WTC11 (cell line): ENCODE measurements at regions of chr1 and their contacts with region 1.

Region 1: GRCh38 chr1:224457782-224458144 is 23.2 kb upstream of the WDR26 start:
- DNase-seq: no peak
- ATAC-seq: no peak
- H3K4me3 Mint-ChIP-seq: no peak overlapping the region
- H3K27ac Mint-ChIP-seq: no peak overlapping the region
- H3K4me1 Mint-ChIP-seq: peaks cover 17% of the 10 kb centered on the region
- H3K27me3 Mint-ChIP-seq: no peaks in the 10 kb centered on the region
- CTCF ChIP-seq: no peak

Region 2: GRCh38 chr1:224411766-224412165 is 46.0 kb before region 1 on chr1:
- CTCF ChIA-PET with region 1: interaction called, 20 read pairs
- POLR2A ChIA-PET with region 1: no interaction called
- DNase-seq: no peak
- ATAC-seq: no peak
- H3K4me3 Mint-ChIP-seq: no peak overlapping the region
- H3K27ac Mint-ChIP-seq: no peak overlapping the region
- H3K4me1 Mint-ChIP-seq: no peaks in the 10 kb centered on the region
- H3K27me3 Mint-ChIP-seq: no peaks in the 10 kb centered on the region
- CTCF ChIP-seq: no peak

Region 3: DNA sequence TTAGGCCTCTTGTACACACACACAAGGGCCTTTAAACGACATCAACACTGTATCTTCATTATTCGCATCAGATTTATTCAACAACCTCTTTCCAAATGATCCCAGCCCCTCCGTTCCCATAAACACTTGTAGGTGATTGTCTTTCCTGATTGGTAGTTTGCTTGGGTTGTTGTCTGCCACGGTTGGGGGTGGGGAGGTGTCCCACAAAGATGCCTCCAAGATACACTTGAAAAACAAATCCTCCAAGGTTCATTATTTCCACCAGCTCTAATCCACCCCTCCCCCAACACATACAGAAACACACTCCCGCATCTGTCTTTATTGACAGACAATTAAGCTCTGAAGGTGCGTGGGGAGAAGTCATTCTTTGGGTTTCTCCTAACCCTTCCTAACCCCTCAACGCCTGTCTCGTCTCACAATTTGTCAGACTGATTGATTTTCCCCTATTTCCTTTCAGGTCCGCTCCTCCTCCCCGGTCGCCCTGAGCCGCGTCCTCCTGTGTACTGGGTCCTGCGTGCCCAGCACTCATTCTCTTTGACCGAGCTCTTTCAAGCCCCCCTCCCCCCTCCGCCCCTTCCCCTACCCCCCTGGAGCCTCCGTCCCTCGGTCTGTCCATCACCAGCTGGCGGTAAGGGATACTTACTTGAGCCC is 24.6 kb before region 1 on chr1:
- CTCF ChIA-PET with region 1: interaction called, 11 read pairs
- POLR2A ChIA-PET with region 1: interaction called, 7 read pairs
- DNase-seq: no peak
- ATAC-seq: peak; percentile 3; the same call in 1 of the 2 replicates
- H3K4me3 Mint-ChIP-seq: peak overlapping the region; percentile 90
- H3K27ac Mint-ChIP-seq: peak overlapping the region; percentile 78
- H3K4me1 Mint-ChIP-seq: peaks cover 42% of the 10 kb centered on the region
- H3K27me3 Mint-ChIP-seq: no peaks in the 10 kb centered on the region; the same call in 1 of the 2 replicates
- CTCF ChIP-seq: no peak

Region 4: GRCh38 chr1:224447251-224447650 is 10.5 kb before region 1 on chr1:
- CTCF ChIA-PET with region 1: interaction called, 18 read pairs
- POLR2A ChIA-PET with region 1: no interaction called
- DNase-seq: no peak
- ATAC-seq: no peak
- H3K4me3 Mint-ChIP-seq: no peak overlapping the region
- H3K27ac Mint-ChIP-seq: no peak overlapping the region
- H3K4me1 Mint-ChIP-seq: 0 out of 2 replicates have a peak, but pooled peaks cover 2% of the 10 kb centered on the region
- H3K27me3 Mint-ChIP-seq: no peaks in the 10 kb centered on the region
- CTCF ChIP-seq: no peak

Region 5: DNA sequence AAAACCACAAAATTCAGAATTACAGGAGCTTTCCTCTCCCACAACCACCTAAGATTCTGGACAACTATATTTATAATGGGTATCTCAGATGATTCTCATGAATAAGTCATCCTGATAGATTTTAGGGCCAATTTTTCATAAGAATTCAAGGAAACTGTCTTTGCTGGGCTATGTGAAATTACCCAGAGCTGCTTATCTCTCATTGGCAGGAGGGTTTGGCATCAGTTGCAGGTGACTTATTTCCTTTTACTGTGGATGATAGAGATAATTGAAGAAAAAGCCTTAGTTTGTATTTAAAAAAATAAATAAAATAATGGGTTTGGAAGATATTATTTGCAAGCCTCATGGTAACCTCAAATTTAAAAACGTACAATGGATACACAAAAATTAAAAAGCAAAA is 15.0 kb after region 1 on chr1:
- CTCF ChIA-PET with region 1: interaction called, 11 read pairs
- POLR2A ChIA-PET with region 1: no interaction called
- DNase-seq: no peak
- ATAC-seq: no peak
- H3K4me3 Mint-ChIP-seq: no peak overlapping the region
- H3K27ac Mint-ChIP-seq: no peak overlapping the region
- H3K4me1 Mint-ChIP-seq: no peaks in the 10 kb centered on the region
- H3K27me3 Mint-ChIP-seq: no peaks in the 10 kb centered on the region
- CTCF ChIP-seq: no peak

Region 6: DNA sequence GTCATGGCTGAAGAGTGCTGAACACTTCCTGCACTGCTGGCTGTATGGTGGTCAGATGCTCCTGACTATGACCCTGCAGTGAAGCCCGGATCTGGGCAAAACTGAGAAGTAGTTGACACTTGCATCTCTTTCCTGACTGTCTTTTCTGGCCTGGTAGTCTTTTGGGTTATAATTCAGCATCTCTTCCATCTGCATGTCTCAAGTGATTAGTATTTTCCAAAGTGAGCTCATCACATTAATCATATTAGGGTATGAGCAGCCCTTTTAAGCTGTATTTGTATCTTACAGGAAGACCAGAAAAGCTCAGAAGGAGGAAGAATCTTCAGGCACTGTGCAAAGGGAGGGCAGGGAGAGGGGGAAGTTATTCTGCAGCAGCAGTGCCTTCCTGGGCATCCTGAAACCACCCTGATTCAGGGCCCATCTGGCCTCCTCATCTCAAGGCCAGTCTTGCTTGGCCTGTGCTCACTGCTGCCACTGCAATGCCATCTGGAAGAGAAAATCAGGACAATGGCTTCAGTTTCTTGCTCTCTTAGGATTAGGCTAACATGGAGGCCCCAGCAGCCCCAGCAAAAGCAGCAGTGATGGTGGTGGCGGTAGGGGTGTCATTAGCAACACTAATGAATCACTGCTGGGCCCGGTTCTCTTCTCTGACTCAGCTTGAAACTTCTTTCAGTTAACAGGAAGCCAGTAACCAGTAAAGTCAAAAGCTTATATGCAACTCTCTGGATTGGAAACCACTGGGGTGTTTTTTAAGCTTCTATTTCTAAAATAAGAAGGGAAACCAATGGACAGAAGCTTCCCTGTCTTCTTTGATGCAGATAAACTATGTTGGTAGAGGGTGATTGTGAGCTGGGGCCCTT is 40.2 kb after region 1 on chr1:
- CTCF ChIA-PET with region 1: interaction called, 20 read pairs
- POLR2A ChIA-PET with region 1: interaction called, 3 read pairs
- DNase-seq: peak; percentile 54
- ATAC-seq: peak; percentile 52
- H3K4me3 Mint-ChIP-seq: peak overlapping the region; percentile 23
- H3K27ac Mint-ChIP-seq: peak overlapping the region; percentile 100
- H3K4me1 Mint-ChIP-seq: peaks cover 80% of the 10 kb centered on the region
- H3K27me3 Mint-ChIP-seq: peaks cover 4% of the 10 kb centered on the region; the same call in 1 of the 2 replicates
- CTCF ChIP-seq: no peak

Region 7: DNA sequence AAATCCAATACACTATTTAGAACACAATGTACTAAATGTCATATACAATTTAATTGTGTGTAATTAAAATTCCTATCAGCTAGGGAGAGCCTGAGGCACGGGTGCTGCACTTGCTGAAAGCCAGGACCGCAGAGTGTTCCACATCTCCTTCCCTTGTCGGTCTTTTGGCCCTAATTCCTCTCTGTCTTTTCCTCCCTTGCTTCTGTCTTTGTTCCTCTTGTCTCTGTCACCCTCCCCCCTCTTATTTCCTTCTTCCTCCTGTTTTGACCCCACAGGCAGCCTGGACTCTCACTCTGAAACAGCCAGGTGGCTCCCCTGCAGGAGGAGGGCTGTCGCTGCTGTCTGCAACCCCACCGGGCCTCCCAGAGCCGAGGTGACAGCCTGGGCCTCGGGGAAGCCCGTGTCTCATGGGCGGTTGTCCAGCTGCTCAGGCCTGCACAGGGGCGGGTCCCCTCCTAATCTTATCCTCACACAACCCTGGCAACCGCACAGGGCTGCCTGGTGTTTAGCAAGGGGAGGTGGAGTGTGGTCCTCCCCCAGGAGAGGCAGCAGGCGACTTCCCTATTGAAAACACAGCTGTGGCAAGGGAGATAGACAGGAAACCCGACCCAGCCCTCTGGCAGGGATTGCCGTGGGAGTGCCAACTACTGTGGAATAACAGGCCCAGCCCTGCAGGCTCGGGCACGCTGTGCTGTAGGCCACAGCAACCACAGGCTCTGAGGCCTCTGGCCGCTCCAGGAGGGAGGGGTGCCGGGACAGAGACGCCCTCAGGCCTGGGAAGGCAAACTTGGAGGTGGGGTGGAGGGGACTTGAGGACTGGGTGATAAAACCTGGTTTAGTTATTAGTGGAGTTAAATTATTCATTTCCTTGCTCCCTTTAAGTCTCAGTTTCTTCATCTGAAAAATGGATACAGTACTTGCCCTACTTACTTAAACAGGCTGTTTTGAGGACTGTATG is 45.7 kb after region 1 on chr1:
- CTCF ChIA-PET with region 1: interaction called, 20 read pairs
- POLR2A ChIA-PET with region 1: interaction called, 3 read pairs
- DNase-seq: peak; percentile 72
- ATAC-seq: peak; percentile 63
- H3K4me3 Mint-ChIP-seq: peak overlapping the region; percentile 5; the same call in 1 of the 2 replicates
- H3K27ac Mint-ChIP-seq: peak overlapping the region; percentile 81
- H3K4me1 Mint-ChIP-seq: peaks cover 77% of the 10 kb centered on the region
- H3K27me3 Mint-ChIP-seq: no peaks in the 10 kb centered on the region
- CTCF ChIP-seq: no peak